HEK293 (cell line): ENCODE measurements at regions of chr19 and their contacts with region 1.

Region 1: DNA sequence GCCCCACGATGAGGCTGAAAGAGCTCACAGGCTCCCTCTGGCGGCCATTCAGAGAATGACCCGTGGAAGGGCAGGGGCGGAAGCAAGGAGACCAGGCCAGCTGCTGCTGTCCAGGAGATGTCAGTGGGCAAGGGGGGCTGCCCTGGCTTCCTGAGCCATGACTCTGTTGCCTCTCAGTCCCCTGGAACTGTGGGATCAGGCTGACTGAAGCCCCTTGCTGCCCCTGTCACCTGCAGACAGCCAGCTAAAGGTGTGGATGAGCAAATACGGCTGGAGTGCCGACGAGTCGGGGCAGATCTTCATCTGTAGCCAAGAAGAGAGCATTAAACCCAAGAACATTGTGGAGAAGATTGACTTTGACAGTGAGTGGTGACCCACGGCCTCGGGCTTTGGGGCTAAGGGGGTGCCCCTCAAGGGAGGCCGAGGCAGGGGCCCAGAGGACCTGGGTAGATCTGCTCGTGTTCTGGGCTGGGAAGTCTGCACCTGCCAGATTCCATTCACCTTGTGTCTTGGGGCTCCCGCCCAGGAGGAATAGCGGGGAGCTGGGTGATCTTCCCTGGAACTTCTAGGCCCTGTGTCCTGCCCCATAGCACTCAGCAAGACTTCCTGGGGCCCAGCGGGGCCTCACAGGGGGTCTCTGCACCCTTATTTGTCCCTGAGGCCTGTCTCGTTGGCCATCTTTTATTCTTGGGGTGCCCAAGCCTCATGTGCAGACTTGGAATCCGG is 12.5 kb upstream of the ACTN4 start:
- H3K4me3 ChIP-seq: no peak overlapping the region
- H3K27ac ChIP-seq: peak overlapping the region; percentile 31; the same call in 1 of the 2 replicates
- H3K4me1 ChIP-seq: no peaks in the 10 kb centered on the region; the same call in 1 of the 2 replicates
- CTCF ChIP-seq: peak; percentile 96

Region 2: GRCh38 chr19:38514812-38515633 is 119.9 kb before region 1 on chr19:
- CTCF ChIA-PET with region 1: interaction called, 138 read pairs
- POLR2A ChIA-PET with region 1: interaction called, 3 read pairs
- H3K4me3 ChIP-seq: no peak overlapping the region
- H3K27ac ChIP-seq: no peak overlapping the region
- H3K4me1 ChIP-seq: no peaks in the 10 kb centered on the region
- CTCF ChIP-seq: peak; percentile 97

Region 3: GRCh38 chr19:38557205-38557799 is 77.6 kb before region 1 on chr19:
- CTCF ChIA-PET with region 1: interaction called, 11 read pairs
- POLR2A ChIA-PET with region 1: no interaction called
- H3K4me3 ChIP-seq: no peak overlapping the region
- H3K27ac ChIP-seq: no peak overlapping the region
- H3K4me1 ChIP-seq: peaks cover 9% of the 10 kb centered on the region
- CTCF ChIP-seq: no peak

Region 4: DNA sequence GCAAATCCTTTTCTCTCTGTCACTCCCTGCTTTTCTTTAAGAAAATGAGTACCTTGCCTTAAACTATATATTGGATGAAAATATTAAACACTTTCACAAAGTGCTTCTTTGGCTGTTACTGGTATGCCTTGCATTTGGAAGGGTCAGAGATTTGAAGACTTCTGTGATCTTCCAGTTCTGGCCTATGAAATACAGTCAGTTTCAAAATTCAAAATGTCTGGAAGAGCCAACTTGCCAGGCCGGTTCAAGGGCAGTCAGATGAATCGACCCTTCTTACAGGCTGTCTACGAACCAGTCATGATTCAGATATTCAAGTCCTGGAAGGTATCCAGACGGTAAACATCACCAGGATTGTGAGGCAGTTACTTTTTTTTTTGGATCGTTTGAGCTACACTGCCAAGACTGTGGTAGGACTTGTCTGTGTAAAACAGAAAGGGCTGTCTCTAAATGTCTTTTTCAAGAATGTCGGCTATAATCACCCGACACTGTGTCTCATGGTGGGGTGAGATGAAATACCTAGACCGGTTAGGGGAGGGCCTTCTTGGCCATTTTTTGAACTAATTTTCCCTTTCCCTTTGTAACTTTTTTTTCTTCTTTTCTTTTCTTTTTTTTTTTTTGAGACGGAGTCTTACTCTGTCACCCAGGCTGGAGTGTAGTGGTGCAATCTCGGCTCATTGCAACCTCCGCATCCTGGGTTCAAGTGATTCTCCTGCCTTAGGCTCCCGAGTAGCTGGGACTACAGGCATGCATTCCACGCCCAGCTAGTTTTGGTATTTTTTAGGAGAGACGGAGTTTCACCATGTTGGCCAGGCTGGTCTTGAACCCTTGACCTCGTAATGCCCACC is 23.8 kb after region 1 on chr19:
- CTCF ChIA-PET with region 1: interaction called, 12 read pairs
- POLR2A ChIA-PET with region 1: interaction called, 4 read pairs
- H3K4me3 ChIP-seq: no peak overlapping the region
- H3K27ac ChIP-seq: peak overlapping the region; percentile 70
- H3K4me1 ChIP-seq: peaks cover 70% of the 10 kb centered on the region
- CTCF ChIP-seq: no peak

Region 5: DNA sequence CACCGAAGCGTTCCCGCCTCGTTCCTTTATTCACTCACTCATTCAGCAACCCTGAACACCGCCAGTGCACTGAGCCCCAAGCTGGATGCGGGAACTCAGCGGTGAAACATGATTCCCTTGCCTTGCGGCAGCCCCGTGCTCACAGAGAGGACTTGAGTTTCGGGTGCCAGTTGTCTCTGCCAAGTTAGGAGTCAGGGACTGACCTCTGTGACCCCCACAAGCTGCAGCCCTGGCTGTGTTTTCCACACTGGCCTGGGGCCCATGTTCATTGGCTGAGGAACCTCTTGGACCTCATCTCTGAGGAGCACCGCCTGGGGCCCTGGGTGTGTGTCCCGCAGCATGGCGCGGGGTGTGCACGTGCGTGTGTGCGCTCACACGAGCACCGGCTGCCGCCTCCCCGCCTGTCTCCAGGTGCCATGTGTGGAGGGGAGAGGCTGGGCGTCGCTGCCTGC is 78.3 kb after region 1 on chr19:
- CTCF ChIA-PET with region 1: interaction called, 21 read pairs
- POLR2A ChIA-PET with region 1: no interaction called
- H3K4me3 ChIP-seq: no peak overlapping the region
- H3K27ac ChIP-seq: 0 out of 2 replicates have a peak overlapping the region, but pooled peaks have one; percentile 16
- H3K4me1 ChIP-seq: no peaks in the 10 kb centered on the region
- CTCF ChIP-seq: no peak